OCI-LY7 (cell line): ENCODE measurements at regions of chr11 and their contacts with region 1.

Region 1: GRCh38 chr11:30619767-30620166 is 33.6 kb upstream of the MPPED2 start:
- DNase-seq: no peak
- H3K4me3 ChIP-seq: no peak overlapping the region
- H3K27ac ChIP-seq: no peak overlapping the region
- H3K4me1 ChIP-seq: no peaks in the 10 kb centered on the region
- CTCF ChIP-seq: no peak

Region 2: DNA sequence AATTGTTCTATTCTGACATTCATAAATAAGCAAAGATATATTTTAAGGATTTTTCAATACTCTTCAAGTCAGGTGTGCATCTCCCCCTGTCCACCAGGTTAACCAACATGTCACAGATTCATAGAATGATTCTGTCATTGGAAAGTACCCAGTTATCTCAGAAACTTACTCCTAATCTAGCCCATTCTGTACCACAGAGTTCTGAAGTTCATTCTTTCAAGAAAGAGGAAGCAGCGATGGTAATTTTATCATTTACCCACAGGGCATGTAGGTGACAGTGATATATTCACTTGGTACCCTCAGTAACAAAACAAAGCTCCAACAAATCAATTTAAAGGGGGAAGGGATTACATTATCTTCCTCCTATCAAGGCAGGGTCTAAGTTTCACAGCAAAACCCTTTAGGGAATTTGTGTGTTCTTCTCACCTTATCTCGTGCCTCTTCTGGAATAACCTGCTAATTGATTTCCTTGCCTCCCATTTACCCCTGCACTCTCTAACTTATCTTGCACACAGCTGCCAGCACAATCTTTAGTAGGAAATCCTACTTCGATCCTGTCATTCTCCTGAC is 14.6 kb before region 1 on chr11:
- CTCF ChIA-PET with region 1: no interaction called
- POLR2A ChIA-PET with region 1: no interaction called
- intact Hi-C with region 1: no loop called
- DNase-seq: no peak
- H3K4me3 ChIP-seq: no peak overlapping the region
- H3K27ac ChIP-seq: no peak overlapping the region
- H3K4me1 ChIP-seq: no peaks in the 10 kb centered on the region
- CTCF ChIP-seq: no peak

Region 3: DNA sequence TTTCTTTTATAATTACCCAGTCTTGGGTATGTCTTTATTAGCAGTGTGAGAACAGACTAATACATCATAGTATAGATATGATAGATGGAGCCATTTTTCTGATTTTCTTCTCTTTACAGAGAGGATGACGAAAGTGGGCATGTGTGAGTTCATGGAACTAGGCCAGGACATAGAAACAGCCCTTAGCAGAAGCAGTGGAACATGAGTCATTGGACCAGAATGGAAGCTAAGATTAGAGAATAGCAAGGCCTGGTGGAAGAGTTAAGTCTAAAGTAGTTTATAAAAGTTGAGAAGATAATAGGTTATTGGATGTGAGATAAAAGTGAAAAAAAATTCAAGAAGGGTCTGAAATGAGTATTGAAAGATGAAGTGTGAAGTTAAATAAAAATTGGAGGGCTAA is 63.4 kb after region 1 on chr11:
- CTCF ChIA-PET with region 1: no interaction called
- POLR2A ChIA-PET with region 1: no interaction called
- intact Hi-C with region 1: loop called (anchors 10 kb)
- DNase-seq: no peak
- H3K4me3 ChIP-seq: no peak overlapping the region
- H3K27ac ChIP-seq: no peak overlapping the region
- H3K4me1 ChIP-seq: no peaks in the 10 kb centered on the region
- CTCF ChIP-seq: no peak

Region 4: DNA sequence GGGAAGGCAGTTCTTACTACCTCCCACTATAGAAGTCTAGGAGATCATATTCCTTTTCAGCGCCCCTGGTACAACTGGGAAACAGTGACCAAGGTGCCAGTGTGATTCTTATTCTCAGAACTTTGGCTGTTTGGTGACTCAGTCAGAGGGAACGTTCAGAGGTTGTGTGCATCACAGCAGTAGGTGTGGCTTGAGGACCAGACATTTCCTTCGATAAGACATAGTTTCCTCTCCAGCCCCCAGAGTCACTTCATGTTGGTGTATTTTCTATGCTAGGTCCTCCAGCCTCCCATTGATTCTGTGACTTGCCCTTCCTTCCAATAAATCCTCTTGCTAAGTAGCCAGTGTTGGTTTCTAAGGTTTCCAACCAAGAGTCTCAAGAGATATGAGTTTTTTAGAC is 138.2 kb after region 1 on chr11:
- CTCF ChIA-PET with region 1: no interaction called
- POLR2A ChIA-PET with region 1: no interaction called
- intact Hi-C with region 1: no loop called
- DNase-seq: no peak
- H3K4me3 ChIP-seq: no peak overlapping the region
- H3K27ac ChIP-seq: no peak overlapping the region
- H3K4me1 ChIP-seq: no peaks in the 10 kb centered on the region
- CTCF ChIP-seq: no peak